Naive thymus-derived CD4-positive, alpha-beta T cell (primary cell): ENCODE measurements at regions of chr9 and their contacts with region 1.

Region 1: GRCh38 chr9:74404620-74405019 is 92.5 kb upstream of the RORB start:
- DNase-seq: no peak
- ATAC-seq: no peak
- H3K4me3 ChIP-seq: no peak overlapping the region
- H3K4me3 Mint-ChIP-seq: no peak overlapping the region
- H3K27ac ChIP-seq: no peak overlapping the region
- H3K27ac Mint-ChIP-seq: no peak overlapping the region
- H3K4me1 ChIP-seq: no peaks in the 10 kb centered on the region
- H3K4me1 Mint-ChIP-seq: no peaks in the 10 kb centered on the region
- H3K27me3 ChIP-seq: no peaks in the 10 kb centered on the region
- H3K27me3 Mint-ChIP-seq: peaks cover 0 to 3% (median 0%) of the 10 kb centered on the region in 5 donors

Region 2: GRCh38 chr9:74415995-74416394 is 11.4 kb after region 1 on chr9:
- CTCF ChIA-PET with region 1: no interaction called
- POLR2A ChIA-PET with region 1: no interaction called
- intact Hi-C with region 1: no loop called
- DNase-seq: no peak
- ATAC-seq: no peak
- H3K4me3 ChIP-seq: no peak overlapping the region
- H3K4me3 Mint-ChIP-seq: no peak overlapping the region
- H3K27ac ChIP-seq: no peak overlapping the region
- H3K27ac Mint-ChIP-seq: peak overlapping the region in 1 of 9 donors; percentile 17
- H3K4me1 ChIP-seq: no peaks in the 10 kb centered on the region
- H3K4me1 Mint-ChIP-seq: no peaks in the 10 kb centered on the region
- H3K27me3 ChIP-seq: no peaks in the 10 kb centered on the region
- H3K27me3 Mint-ChIP-seq: no peaks in the 10 kb centered on the region

Region 3: DNA sequence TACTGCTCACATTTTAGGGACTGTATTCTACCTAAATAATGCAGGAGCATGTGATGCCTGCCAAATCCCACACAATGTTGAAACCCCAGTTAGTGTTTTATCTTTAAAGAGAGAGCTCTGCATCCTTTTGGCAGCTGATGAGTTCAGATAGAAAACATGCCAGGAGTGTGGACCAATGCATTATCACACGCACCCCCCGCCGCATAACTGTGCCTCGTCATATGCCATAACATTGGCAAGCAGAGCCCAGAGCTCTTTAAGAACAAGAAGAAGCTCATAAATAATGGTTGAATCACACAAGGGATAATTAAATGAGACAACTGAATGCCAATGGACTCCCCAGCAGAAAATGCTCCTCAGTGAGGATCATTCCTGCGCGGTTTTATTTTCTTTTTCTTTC is 39.7 kb after region 1 on chr9:
- CTCF ChIA-PET with region 1: no interaction called
- POLR2A ChIA-PET with region 1: no interaction called
- intact Hi-C with region 1: loop called in 1 of 2 experiments (anchors 1 kb)
- DNase-seq: no peak
- ATAC-seq: no peak
- H3K4me3 ChIP-seq: no peak overlapping the region
- H3K4me3 Mint-ChIP-seq: no peak overlapping the region
- H3K27ac ChIP-seq: no peak overlapping the region
- H3K27ac Mint-ChIP-seq: no peak overlapping the region
- H3K4me1 ChIP-seq: no peaks in the 10 kb centered on the region
- H3K4me1 Mint-ChIP-seq: no peaks in the 10 kb centered on the region
- H3K27me3 ChIP-seq: no peaks in the 10 kb centered on the region
- H3K27me3 Mint-ChIP-seq: no peaks in the 10 kb centered on the region